Activated T-helper 2 cell treated with anti-CD3 and anti-CD28 coated beads, Interferon-gamma antibody, Interleukin-2, Interleukin-4, amounts not matched to agents 10 μg/mL and 5 μg/mL and 100 μg/mL, durations not matched to agents 14 hours and 24 hours and 36 hours (primary cell): ENCODE measurements at regions of chr4 and their contacts with region 1.

Region 1: DNA sequence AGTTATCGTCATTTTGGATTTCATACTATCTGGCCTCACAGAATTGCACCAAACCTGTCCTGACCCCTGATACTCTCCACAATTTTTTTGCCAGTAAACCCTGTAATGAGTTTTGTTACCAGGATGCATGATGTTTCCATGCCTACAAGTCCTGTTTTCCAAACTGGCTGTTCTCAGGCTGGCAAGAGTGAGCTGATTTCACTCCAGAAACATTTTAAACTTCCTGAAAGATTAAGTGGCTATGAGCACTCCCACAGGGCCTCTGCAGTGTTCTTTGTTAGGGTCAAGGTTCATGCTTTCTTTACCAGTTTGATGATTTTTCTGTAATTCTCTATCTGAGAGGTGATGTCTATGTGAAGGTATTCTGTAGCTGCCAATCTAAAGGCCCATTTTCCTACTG is 31.7 kb upstream of the PDLIM3 start:
- DNase-seq: no peak
- H3K4me3 Mint-ChIP-seq: no peak overlapping the region
- H3K27ac Mint-ChIP-seq: no peak overlapping the region
- H3K4me1 Mint-ChIP-seq: peaks cover 4% of the 10 kb centered on the region
- H3K27me3 Mint-ChIP-seq: peaks cover 11% of the 10 kb centered on the region

Region 2: DNA sequence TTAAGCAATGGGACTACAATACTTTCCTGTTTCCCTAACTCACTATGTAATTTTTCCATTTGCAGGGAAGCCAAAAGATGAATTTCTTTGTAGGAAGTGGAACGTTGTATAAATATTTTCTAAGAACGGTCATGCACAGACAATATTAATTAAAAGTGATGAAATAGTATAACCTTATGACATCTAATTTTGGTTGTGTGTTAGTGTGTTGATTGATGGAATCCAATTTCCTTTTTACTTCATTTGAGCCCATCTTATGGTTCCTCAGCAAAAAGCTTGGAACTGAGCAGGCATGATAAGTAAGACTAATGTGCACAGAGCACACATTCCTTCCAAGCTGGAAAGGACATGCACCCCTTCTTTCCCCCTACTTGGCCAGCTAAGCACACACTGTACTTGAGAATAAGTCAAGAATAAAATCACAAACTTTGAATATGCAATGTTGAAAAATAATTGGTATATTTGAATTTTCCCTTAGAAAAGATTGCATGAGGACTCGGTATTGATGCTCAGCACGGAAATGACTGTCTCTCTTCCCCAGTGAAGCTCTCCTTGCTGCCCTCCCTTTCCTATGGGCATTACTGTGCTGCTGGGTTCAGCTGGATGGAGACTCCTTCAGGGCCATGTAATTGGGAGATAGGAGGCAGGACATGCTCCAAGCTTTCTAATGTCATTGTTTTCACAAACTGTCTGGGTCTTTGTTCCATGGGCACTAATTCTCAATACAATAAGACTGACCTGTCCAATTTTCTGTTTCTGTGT is 12.4 kb before region 1 on chr4:
- intact Hi-C with region 1: no loop called
- DNase-seq: no peak
- H3K4me3 Mint-ChIP-seq: no peak overlapping the region
- H3K27ac Mint-ChIP-seq: no peak overlapping the region
- H3K4me1 Mint-ChIP-seq: no peaks in the 10 kb centered on the region
- H3K27me3 Mint-ChIP-seq: peaks cover 24% of the 10 kb centered on the region

Region 3: DNA sequence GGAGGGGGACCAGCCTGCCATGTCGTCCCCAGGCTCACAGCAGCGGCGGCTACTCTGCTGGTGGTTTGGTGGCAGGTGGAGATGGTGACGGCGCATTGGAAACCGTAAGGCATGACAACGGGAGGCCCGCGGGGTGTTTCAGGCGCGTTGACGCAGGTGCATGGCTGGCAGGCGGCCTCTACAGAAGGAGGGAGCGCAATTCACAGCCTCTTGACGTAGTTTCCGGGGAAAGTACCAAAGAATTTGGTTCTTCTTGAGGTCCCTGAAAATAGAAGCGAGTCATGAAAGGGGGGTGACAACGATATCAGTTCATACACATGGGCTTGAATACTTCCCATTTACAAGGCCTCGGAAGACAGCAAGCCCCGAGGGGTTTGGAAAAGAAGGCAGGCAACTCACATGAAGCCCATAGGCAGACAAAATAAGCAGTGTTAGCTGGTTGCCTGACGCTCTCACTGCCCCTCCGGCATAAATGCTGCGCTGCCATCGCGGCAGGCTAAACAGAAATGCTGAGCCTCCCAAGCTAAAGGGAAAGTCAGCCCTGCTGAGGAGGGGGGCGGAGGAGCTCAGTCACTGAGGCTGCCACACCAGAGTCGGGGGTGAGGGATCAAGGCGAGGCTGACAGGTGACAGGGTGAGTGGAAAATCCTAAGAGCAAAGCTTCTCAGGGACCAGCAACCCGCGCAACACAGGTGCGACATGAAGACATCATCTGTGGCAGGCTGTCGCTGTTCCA is 20.6 kb after region 1 on chr4:
- intact Hi-C with region 1: loop called (anchors 1 kb)
- DNase-seq: peak; percentile 32
- H3K4me3 Mint-ChIP-seq: peak overlapping the region; percentile 45
- H3K27ac Mint-ChIP-seq: peak overlapping the region; percentile 81
- H3K4me1 Mint-ChIP-seq: peaks cover 15% of the 10 kb centered on the region
- H3K27me3 Mint-ChIP-seq: peaks cover 33% of the 10 kb centered on the region

Region 4: DNA sequence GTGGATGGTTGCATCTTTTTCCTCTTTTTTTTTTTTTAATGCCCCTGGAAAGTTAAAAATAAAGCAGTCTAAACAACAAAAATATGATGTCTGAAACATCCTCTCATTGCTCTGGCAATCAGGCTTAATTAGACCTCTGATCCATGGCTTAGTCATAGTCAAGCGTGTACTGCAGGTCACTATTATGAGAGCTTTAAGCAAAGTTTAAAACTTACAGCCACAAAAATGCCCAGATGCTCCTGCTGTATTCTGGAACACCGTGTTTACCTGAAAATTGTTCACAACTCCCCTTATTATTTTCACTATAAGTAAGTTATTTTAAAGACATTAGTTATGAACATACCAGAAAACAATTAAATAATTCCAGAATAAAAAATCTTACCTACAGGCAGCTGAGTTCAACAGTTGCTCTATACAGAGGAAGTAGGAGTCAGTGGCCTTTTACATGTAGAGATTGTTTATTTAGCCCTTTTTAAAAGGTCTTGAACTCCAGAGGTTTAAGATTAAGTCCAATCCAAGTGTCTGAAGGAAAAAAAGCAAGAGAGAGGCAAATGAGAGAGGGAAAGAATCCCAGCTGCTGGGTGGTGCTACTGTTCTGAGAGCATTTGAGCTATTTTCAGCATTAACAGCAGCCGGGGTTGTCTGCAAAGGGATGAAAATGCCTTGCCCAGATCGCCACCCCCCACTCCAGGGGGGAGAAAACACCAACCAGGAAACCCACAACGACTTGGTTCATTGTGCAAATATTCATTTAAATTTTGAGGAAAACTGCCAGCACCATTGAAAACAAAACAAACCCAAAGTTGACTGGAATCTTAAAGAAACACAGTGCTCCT is 208.1 kb after region 1 on chr4:
- intact Hi-C with region 1: no loop called
- DNase-seq: no peak
- H3K4me3 Mint-ChIP-seq: no peak overlapping the region
- H3K27ac Mint-ChIP-seq: no peak overlapping the region
- H3K4me1 Mint-ChIP-seq: no peaks in the 10 kb centered on the region
- H3K27me3 Mint-ChIP-seq: peaks cover 9% of the 10 kb centered on the region